ENCODE measurements at regions of chr16 and their contacts with region 1.

Region 1: DNA sequence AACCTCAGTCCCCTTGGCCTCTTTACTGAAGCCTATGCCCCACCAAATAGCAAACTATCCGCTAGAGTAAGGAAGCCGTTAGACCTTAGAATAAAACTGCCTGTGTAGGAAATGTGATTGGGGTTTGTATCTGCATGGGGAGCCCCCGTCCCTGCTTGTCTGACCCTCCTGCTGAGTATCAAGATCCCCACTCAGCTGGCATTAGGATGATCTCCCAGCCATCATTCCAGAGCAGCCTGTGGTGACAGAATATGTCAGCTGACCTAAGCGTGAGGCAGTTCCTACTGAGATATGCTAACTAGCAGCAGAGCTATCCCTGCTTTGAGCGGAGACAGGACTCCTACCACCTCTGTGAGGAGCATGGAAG is 645 bp upstream of the GFOD2 start:
- DNase-seq: no peak
- ATAC-seq: peak; percentile 74 to 77
- H3K4me3 ChIP-seq: peak overlapping the region; percentile 69
- H3K27ac ChIP-seq: peak overlapping the region; percentile 91
- H3K4me1 ChIP-seq: no peaks in the 10 kb centered on the region
- H3K27me3 ChIP-seq: no peaks in the 10 kb centered on the region

Region 2: DNA sequence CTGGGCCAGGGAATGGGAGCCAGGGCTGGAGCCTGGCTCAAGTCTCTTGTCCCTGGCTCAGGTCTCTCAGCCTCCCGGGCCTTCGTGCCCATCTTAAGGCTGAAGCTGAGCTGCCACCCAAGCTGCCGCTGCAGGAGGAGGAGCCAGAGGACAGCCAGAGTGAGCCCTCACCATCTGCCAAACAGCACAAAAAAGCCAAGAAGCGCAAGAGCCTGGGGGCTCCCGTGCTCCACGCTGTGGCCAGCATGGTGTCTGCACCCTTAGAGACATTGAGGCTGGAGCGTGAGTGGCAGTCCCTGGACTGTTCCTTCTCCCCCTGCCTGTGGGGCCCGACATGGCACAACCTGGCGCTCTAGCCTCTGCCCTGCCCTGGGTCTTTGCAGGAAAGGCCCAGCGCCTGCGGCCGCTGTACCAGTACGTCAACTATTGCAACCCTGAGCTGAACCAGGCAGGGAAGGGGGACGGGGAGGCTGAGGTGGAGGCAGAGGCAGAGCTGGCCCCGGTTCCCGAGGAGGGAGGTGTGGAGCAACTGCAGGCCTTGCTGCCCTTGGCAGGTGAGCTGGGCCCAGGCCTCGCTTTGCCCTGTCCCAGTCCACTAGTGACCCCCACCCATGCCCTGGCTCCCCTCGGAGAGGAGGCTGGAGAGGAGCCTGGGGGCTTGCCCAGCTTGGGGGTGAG is 51.8 kb before region 1 on chr16:
- intact Hi-C with region 1: no loop called
- DNase-seq: peak; percentile 88 to 95 (median 94)
- ATAC-seq: peak; percentile 83 to 86
- H3K4me3 ChIP-seq: no peak overlapping the region
- H3K27ac ChIP-seq: peak overlapping the region; percentile 75
- H3K4me1 ChIP-seq: peaks cover 5% of the 10 kb centered on the region
- H3K27me3 ChIP-seq: no peaks in the 10 kb centered on the region

Region 3: GRCh38 chr16:67773099-67773498 is 53.3 kb after region 1 on chr16:
- intact Hi-C with region 1: loop called in 1 of 4 experiments (anchors 10 kb)
- DNase-seq: peak in 2 of 3 donors; percentile 38 to 61
- ATAC-seq: peak; percentile 65 to 80
- H3K4me3 ChIP-seq: no peak overlapping the region
- H3K27ac ChIP-seq: no peak overlapping the region
- H3K4me1 ChIP-seq: peaks cover 11% of the 10 kb centered on the region
- H3K27me3 ChIP-seq: no peaks in the 10 kb centered on the region

Region 4: GRCh38 chr16:68636064-68636560 is 916.4 kb after region 1 on chr16:
- intact Hi-C with region 1: no loop called
- DNase-seq: no peak
- ATAC-seq: no peak
- H3K4me3 ChIP-seq: no peak overlapping the region
- H3K27ac ChIP-seq: no peak overlapping the region
- H3K4me1 ChIP-seq: no peaks in the 10 kb centered on the region
- H3K27me3 ChIP-seq: no peaks in the 10 kb centered on the region

Measured in right cardiac atrium (tissue), 5 donors.